ENCODE measurements at regions of chr3 and their contacts with region 1.

Region 1: GRCh38 chr3:197674741-197675562 is 61.8 kb downstream of the RUBCN start:
- DNase-seq: no peak
- ATAC-seq: no peak
- H3K4me3 ChIP-seq: no peak overlapping the region
- H3K27ac ChIP-seq: no peak overlapping the region
- H3K4me1 ChIP-seq: no peaks in the 10 kb centered on the region
- H3K27me3 ChIP-seq: no peaks in the 10 kb centered on the region
- CTCF ChIP-seq: no peak

Region 2: GRCh38 chr3:197700095-197700494 is 25.1 kb after region 1 on chr3:
- CTCF ChIA-PET with region 1: no interaction called
- POLR2A ChIA-PET with region 1: interaction called, 12 read pairs
- in situ Hi-C with region 1: no loop called
- intact Hi-C with region 1: no loop called
- DNase-seq: no peak
- ATAC-seq: no peak
- H3K4me3 ChIP-seq: no peak overlapping the region
- H3K27ac ChIP-seq: no peak overlapping the region
- H3K4me1 ChIP-seq: no peaks in the 10 kb centered on the region
- H3K27me3 ChIP-seq: no peaks in the 10 kb centered on the region
- CTCF ChIP-seq: no peak

Measured in Panc1 (cell line).